HepG2 (cell line): ENCODE measurements at regions of chr17 and their contacts with region 1.

Region 1: GRCh38 chr17:45828628-45829027 is 16.1 kb upstream of the SPPL2C start:
- DNase-seq: no peak
- ATAC-seq: no peak
- H3K4me3 ChIP-seq: no peak overlapping the region
- H3K27ac ChIP-seq: no peak overlapping the region
- H3K4me1 ChIP-seq: no peaks in the 10 kb centered on the region
- H3K27me3 ChIP-seq: peaks cover 30 to 86% of the 10 kb centered on the region in 2 experiments
- CTCF ChIP-seq: no peak
- EP300 ChIP-seq: no peak
- POLR2A ChIP-seq: no peak
- RAD21 ChIP-seq: no peak

Region 2: GRCh38 chr17:45640141-45640850 is 188.3 kb before region 1 on chr17:
- CTCF ChIA-PET with region 1: interaction called, 65 read pairs
- POLR2A ChIA-PET with region 1: interaction called, 7 read pairs
- in situ Hi-C with region 1: loop called (anchors 5 kb)
- intact Hi-C with region 1: loop called (anchors 2 kb)
- DNase-seq: peak; percentile 81
- ATAC-seq: peak; percentile 95
- H3K4me3 ChIP-seq: no peak overlapping the region
- H3K27ac ChIP-seq: no peak overlapping the region
- H3K4me1 ChIP-seq: no peaks in the 10 kb centered on the region
- H3K27me3 ChIP-seq: no peaks in the 10 kb centered on the region
- CTCF ChIP-seq: peak; percentile 98
- EP300 ChIP-seq: peak in 1 of 2 experiments; percentile 7; a peak in 1 of 4 replicates
- POLR2A ChIP-seq: no peak
- RAD21 ChIP-seq: peak; percentile 94

Region 3: DNA sequence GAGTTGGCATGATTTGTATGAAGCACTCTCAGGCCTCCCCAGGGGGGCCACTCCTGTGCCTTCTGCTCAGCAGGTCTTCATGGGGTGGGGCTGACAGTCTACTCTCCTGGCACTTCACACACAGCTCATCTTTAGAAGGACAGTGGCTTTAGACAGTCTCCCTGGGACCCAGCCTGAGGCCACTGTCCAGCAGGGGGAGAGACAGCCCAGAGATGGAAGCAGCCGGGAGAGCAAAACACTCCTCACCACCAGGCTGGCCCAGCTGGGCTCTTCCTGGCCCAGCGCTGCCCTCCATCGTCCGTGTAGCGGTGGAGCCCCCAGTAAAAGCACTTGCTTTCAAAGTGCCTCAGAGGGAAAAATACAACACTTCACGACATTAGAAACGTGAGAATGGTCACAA is 106.5 kb before region 1 on chr17:
- CTCF ChIA-PET with region 1: interaction called, 11 read pairs
- POLR2A ChIA-PET with region 1: no interaction called
- in situ Hi-C with region 1: no loop called
- intact Hi-C with region 1: loop called (anchors 1 kb)
- DNase-seq: peak; percentile 58
- ATAC-seq: peak; percentile 99
- H3K4me3 ChIP-seq: no peak overlapping the region
- H3K27ac ChIP-seq: no peak overlapping the region
- H3K4me1 ChIP-seq: no peaks in the 10 kb centered on the region
- H3K27me3 ChIP-seq: peaks cover 2 to 50% of the 10 kb centered on the region in 2 experiments; a peak in 4 of 5 replicates
- CTCF ChIP-seq: peak; percentile 80
- EP300 ChIP-seq: no peak
- POLR2A ChIP-seq: no peak
- RAD21 ChIP-seq: peak; percentile 84

Region 4: GRCh38 chr17:45852535-45853297 is 24.1 kb after region 1 on chr17:
- CTCF ChIA-PET with region 1: no interaction called
- POLR2A ChIA-PET with region 1: no interaction called
- in situ Hi-C with region 1: no loop called
- intact Hi-C with region 1: no loop called
- DNase-seq: peak; percentile 62
- ATAC-seq: peak; percentile 44
- H3K4me3 ChIP-seq: no peak overlapping the region
- H3K27ac ChIP-seq: no peak overlapping the region
- H3K4me1 ChIP-seq: no peaks in the 10 kb centered on the region
- H3K27me3 ChIP-seq: peaks cover 8 to 47% of the 10 kb centered on the region in 2 experiments; a peak in 3 of 5 replicates
- CTCF ChIP-seq: peak; percentile 90
- EP300 ChIP-seq: no peak
- POLR2A ChIP-seq: no peak
- RAD21 ChIP-seq: peak; percentile 67